Psoas muscle (tissue), 8 donors: ENCODE measurements at regions of chr4 and their contacts with region 1.

Region 1: GRCh38 chr4:181272422-181272821 is 970.8 kb upstream of the TENM3 start:
- DNase-seq: no peak
- ATAC-seq: peak in 3 of 4 donors; percentile 76 to 88 (median 81)
- H3K4me3 ChIP-seq: no peak overlapping the region
- H3K27ac ChIP-seq: no peak overlapping the region
- H3K4me1 ChIP-seq: peaks cover 3% of the 10 kb centered on the region
- H3K27me3 ChIP-seq: no peaks in the 10 kb centered on the region
- CTCF ChIP-seq: no peak

Region 2: GRCh38 chr4:181202240-181202639 is 70.2 kb before region 1 on chr4:
- intact Hi-C with region 1: no loop called
- DNase-seq: no peak
- ATAC-seq: no peak
- H3K4me3 ChIP-seq: no peak overlapping the region
- H3K27ac ChIP-seq: no peak overlapping the region
- H3K4me1 ChIP-seq: no peaks in the 10 kb centered on the region
- H3K27me3 ChIP-seq: no peaks in the 10 kb centered on the region
- CTCF ChIP-seq: no peak

Region 3: GRCh38 chr4:183099537-183100297 is 1827.3 kb after region 1 on chr4:
- intact Hi-C with region 1: loop called in 1 of 2 experiments (anchors 5 kb)
- DNase-seq: peak; percentile 30 to 71
- ATAC-seq: peak; percentile 2 to 11 (median 7)
- H3K4me3 ChIP-seq: peak overlapping the region; percentile 79
- H3K27ac ChIP-seq: peak overlapping the region; percentile 84
- H3K4me1 ChIP-seq: peaks cover 18% of the 10 kb centered on the region
- H3K27me3 ChIP-seq: no peaks in the 10 kb centered on the region
- CTCF ChIP-seq: no peak